PC-3 (cell line): ENCODE measurements at regions of chr14 and their contacts with region 1.

Region 1: DNA sequence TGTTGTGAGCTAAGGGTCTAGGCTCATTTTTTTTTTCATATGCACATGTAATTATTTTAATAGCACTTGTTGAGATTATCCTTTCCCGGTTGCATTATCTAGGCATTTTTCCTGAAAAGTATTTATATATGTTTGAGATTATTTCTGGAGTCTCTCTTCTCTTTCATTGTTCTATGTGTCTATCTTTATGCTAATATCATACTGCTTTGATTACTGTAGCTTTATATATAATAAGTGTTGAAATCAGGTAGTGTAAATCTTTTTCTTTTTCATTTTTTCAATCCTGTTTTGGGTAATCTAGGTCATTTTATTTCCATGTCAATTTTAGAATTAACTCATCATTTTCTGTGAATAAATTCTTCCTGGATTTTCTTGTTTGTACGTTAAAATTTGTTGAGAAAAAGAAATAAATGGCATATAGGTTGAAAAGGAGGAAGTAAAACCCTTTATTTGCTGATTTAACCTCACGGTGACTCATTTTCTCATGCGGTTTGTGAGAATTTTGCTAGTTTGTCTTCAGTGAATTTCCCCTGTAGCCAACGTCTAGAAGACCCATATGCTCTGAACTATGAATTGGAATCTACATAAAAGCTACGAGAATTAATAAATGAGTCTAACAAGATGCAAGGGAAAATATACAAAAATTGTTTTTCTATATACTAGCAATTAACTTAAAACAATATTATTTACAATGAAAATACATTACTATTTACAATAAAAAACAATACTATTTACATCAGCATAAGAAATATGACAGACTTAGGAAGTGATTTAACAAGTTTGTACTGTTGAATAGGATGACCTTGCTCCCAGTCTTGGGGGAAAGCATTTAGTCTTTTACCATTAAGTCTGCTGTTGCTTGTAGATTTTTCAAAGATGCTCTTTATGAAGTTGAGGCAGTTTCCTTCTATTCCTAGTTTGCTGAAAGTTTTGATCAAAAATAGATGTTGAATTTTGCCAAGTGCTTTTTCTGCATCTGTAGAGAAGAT is 105.0 kb downstream of the SNAPC1 start:
- DNase-seq: peak; percentile 90
- ATAC-seq: peak; percentile 96
- H3K4me3 ChIP-seq: no peak overlapping the region
- H3K27ac ChIP-seq: peak overlapping the region; percentile 55
- H3K4me1 ChIP-seq: peaks cover 16% of the 10 kb centered on the region
- H3K27me3 ChIP-seq: no peaks in the 10 kb centered on the region
- CTCF ChIP-seq: no peak

Region 2: GRCh38 chr14:61803755-61804154 is 63.5 kb before region 1 on chr14:
- CTCF ChIA-PET with region 1: no interaction called
- POLR2A ChIA-PET with region 1: interaction called, 11 read pairs
- intact Hi-C with region 1: no loop called
- DNase-seq: no peak
- ATAC-seq: no peak
- H3K4me3 ChIP-seq: no peak overlapping the region
- H3K27ac ChIP-seq: no peak overlapping the region
- H3K4me1 ChIP-seq: no peaks in the 10 kb centered on the region
- H3K27me3 ChIP-seq: no peaks in the 10 kb centered on the region
- CTCF ChIP-seq: no peak